Activated CD4-positive, alpha-beta T cell treated with anti-CD3 and anti-CD28 coated beads for 36 hours (primary cell): ENCODE measurements at regions of chr9 and their contacts with region 1.

Region 1: DNA sequence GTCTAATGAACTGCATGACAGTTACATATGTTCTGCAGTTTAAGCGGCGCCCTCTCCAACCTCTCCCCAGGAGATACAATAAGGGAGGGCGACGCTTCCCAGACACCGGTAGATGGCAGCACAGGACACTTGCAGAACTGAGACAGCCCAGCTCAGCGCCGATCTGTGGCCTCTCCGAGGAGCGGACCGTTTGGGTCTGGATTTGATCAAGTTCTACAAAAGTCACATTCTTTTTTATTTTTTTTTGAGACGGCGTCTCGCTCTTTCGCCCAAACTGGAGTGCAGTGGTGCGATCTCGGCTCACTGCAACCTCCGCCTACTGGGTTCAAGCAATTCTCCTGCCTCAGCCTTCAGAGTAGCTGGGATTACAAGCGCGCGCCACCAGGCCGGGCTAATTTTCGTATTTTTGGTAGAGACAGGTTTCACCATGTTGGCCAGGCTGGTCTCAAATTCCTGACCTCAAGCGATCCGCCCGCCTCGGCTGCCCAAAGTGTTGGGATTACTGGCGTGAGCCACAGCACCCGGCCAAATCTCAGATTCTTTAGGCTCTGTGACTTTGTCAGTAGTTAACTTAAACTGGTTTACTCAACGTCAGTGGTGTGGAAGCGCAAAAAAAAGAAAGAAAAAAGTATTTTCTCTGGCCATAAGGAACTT is 1.4 kb upstream of the ATOSB start:
- DNase-seq: peak; percentile 94
- ATAC-seq: peak; percentile 66
- H3K4me3 Mint-ChIP-seq: peak overlapping the region; percentile 77
- H3K27ac Mint-ChIP-seq: peak overlapping the region; percentile 87
- H3K4me1 Mint-ChIP-seq: peaks cover 44% of the 10 kb centered on the region
- H3K27me3 Mint-ChIP-seq: no peaks in the 10 kb centered on the region

Region 2: DNA sequence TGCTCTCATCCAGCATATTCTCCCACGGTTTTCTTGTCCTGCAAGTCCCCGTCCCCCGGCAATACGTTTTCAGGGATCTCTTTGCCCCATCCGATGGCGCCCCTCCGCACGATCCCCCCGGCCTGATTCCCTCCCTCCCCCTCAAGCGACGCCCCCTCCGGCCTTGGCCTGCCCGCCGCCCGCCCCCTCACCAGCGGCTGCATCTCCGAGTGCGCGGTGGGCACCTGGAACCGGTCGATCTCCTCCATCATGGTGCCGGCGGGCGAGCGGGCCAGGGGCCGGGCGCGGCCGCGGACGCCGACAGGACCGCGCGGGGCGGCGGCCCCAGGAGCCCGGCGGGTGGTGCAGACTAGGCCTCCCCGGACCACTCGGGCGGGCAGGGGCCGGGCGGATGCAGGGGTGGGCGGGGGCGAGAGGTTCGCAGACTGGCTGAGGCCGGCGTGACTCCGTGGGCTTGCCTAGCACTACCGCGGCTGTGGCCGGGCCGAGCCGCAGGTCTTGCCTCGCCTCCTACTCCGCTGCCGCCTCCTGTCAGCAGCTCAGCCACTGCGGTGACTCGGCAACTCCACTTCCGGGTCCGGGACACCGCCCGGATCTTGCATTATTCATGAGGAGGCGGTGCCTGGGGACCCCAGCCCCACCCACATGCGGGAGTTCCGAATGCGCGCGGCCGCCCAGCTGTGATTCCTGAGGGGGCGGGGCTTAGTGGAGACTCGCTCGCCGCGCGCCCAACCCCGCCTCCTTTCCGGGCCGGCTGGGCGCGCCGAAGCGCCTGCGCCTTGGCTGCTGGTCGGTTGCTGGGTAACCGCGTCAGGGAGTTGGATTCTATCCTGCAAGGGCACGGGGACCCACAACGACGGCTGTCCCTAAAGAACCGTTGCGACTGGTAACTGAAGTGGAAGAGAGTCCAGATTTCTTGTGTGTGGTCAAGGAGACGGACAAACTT is 658.7 kb before region 1 on chr9 and contains the starts of genes DNAI1 and FAM219A:
- CTCF ChIA-PET with region 1: no interaction called
- POLR2A ChIA-PET with region 1: no interaction called
- intact Hi-C with region 1: loop called in 1 of 2 experiments (anchors 2 kb)
- DNase-seq: peak; percentile 99
- ATAC-seq: peak; percentile 92
- H3K4me3 Mint-ChIP-seq: peak within 1 kb of the TSS; percentile 84
- H3K27ac Mint-ChIP-seq: peak within 1 kb of the TSS; percentile 75
- H3K4me1 Mint-ChIP-seq: peaks cover 45% of the 10 kb centered on the region
- H3K27me3 Mint-ChIP-seq: peaks cover 9% of the 10 kb centered on the region
- total RNA-seq, gene DNAI1: 0.34 TPM in 1 of 2 experiments, not detected in the other
- total RNA-seq, gene FAM219A: 9.7 to 12.9 TPM

Region 3: GRCh38 chr9:35079426-35080341 is 37.3 kb before region 1 on chr9 and contains the start of gene FANCG:
- CTCF ChIA-PET with region 1: interaction called, 4 read pairs
- POLR2A ChIA-PET with region 1: interaction called, 5 read pairs
- intact Hi-C with region 1: loop called in 1 of 2 experiments (anchors 1 kb)
- DNase-seq: peak; percentile 93
- ATAC-seq: peak; percentile 94
- H3K4me3 Mint-ChIP-seq: peak within 1 kb of the TSS; percentile 81
- H3K27ac Mint-ChIP-seq: peak within 1 kb of the TSS; percentile 96
- H3K4me1 Mint-ChIP-seq: peaks cover 16% of the 10 kb centered on the region
- H3K27me3 Mint-ChIP-seq: no peaks in the 10 kb centered on the region
- total RNA-seq, gene FANCG: 92.8 to 93.4 TPM

Region 4: DNA sequence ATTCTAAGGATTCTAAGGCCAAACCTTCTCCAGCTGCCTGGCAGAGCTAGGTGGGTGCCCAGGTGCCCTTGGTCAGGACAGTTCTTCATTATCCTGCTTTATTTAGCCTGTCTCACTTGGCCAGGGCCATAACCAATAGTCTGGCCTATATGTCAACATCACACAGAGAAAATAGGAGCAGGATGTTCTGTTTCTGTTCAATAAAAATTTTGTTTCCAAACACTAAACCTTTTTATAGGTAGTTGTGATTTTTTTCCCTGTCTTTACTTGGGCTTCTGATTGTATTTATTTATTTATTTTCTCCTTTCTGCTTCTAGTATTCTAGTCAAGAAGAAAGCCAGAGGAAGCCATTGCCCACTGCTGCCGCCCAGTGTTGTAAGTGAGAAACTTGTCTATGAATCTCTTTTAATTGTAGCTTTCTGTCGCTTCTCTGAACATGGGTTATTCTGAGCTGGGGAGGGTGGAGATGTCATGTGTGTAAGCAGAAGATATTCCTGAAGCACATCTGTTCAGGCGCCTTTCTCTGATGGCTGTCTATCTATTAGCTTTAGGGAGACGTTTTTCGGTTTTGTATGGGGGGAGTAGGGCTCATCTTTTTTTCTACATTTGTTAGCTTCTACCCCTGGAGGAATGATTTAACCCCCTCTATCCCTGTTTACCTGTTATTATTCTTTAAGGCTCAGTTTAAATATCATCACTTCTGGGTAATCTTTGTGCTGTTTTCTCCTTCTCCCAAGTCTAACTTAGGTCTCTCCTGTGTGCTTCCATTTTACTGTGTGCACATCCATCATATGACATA is 141.8 kb after region 1 on chr9:
- CTCF ChIA-PET with region 1: interaction called, 15 read pairs
- POLR2A ChIA-PET with region 1: no interaction called
- intact Hi-C with region 1: loop called (anchors 1 kb)
- DNase-seq: peak; percentile 68
- ATAC-seq: peak; percentile 42
- H3K4me3 Mint-ChIP-seq: no peak overlapping the region
- H3K27ac Mint-ChIP-seq: no peak overlapping the region
- H3K4me1 Mint-ChIP-seq: no peaks in the 10 kb centered on the region
- H3K27me3 Mint-ChIP-seq: peaks cover 2% of the 10 kb centered on the region

Region 5: DNA sequence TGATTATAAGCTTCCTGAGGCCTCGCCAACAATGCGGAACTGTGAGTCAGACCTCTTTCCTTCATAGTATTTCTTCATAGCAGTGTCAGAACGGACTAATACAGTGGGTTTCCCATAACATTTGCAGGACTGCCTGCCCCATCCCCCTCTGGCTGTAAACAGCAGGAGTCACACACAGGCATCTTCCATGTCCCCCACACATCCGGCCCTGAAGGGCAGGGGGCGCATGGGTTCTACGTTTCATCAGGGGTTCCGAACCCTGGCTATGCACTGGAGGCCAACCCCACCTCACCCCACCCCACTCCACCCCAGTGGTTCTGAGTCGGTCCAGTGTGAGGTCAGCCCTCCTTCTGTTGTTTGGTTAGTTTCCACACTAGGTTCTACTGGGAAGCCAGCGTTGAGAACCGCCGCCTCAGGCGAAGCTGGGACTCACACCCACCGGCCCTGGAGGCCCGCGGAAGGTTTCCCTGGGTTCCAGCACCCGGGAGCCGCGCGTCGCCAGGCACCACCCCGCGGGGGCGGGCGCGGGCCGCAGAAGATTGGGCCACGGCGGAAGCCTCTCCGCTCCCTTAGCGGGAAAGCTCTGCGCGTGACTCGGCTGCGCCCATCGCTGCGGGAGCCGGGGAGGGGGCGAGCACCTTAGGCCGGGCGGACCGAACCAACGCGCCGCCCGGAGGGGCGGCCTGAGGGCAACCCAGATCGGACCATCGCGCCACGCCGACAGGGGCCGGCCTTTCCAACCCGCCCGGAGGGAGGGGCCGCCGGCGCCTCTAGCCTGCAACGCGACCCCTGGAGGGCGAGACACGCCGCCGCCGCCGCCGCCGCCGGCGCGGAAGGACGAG is 372.5 kb after region 1 on chr9 and contains the start of gene RUSC2:
- CTCF ChIA-PET with region 1: no interaction called
- POLR2A ChIA-PET with region 1: no interaction called
- intact Hi-C with region 1: loop called in 1 of 2 experiments (anchors 1 kb)
- DNase-seq: peak; percentile 82
- ATAC-seq: peak; percentile 72
- H3K4me3 Mint-ChIP-seq: peak within 1 kb of the TSS; percentile 76
- H3K27ac Mint-ChIP-seq: peak within 1 kb of the TSS; percentile 79
- H3K4me1 Mint-ChIP-seq: peaks cover 31% of the 10 kb centered on the region
- H3K27me3 Mint-ChIP-seq: peaks cover 9% of the 10 kb centered on the region
- total RNA-seq, gene RUSC2: 5.7 to 6.5 TPM

Region 6: DNA sequence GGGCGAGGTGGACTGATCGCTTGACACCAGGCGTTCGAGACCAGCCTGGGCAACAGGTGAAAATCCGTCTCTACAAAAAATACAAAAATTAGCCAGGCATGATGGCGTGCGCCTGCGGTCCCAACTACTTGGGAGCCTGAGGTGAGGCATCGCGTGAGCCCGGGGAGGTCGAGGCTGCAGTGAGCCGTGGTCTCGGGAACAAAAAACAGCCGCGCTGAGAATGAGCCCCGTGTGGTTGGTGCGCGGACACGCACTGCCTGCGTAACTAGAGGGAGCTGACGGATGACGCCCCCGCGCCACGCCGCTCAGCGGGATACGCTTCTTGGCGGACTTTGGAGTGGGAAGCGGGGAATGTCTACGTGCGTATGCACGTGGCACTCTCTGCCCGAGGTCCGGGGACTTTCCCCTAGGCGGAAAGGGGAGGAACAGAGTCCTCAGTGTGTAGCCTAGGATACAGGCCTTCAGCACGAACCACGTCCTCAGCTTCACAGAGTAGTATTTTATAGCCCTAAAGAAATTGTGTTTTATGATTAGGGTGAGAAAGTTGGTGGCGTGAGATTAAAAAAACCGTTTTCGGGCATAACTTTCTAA is 540.6 kb after region 1 on chr9 and contains the start of gene RMRP:
- CTCF ChIA-PET with region 1: no interaction called
- POLR2A ChIA-PET with region 1: no interaction called
- intact Hi-C with region 1: loop called in 1 of 2 experiments (anchors 2 kb)
- DNase-seq: peak; percentile 97
- ATAC-seq: peak; percentile 95
- H3K4me3 Mint-ChIP-seq: peak within 1 kb of the TSS; percentile 80
- H3K27ac Mint-ChIP-seq: peak within 1 kb of the TSS; percentile 98
- H3K4me1 Mint-ChIP-seq: peaks cover 64% of the 10 kb centered on the region
- H3K27me3 Mint-ChIP-seq: peaks cover 2% of the 10 kb centered on the region
- total RNA-seq, gene RMRP: 894 to 11,462 TPM

Region 7: DNA sequence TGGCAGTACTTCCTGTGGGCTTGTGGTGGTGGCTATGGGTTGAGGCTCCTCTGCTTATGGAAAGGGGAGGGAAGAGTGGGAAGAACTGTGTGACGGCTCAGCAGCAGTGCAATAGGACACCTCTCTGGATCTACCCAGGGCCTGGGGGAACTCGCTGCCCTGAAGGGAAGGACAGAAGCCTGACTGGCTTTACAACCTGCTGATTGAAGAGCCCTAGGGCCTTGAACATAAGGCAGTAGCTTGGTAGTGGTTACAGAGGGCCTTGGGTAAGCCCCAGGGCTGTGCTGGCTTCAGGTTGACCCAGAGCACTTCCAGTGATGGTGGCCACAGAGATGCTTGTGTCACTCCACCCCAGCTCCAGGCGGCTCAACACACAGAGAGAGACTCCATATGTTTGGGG is 1057.7 kb after region 1 on chr9:
- CTCF ChIA-PET with region 1: no interaction called
- POLR2A ChIA-PET with region 1: no interaction called
- intact Hi-C with region 1: no loop called
- DNase-seq: no peak
- ATAC-seq: no peak
- H3K4me3 Mint-ChIP-seq: no peak overlapping the region
- H3K27ac Mint-ChIP-seq: no peak overlapping the region
- H3K4me1 Mint-ChIP-seq: no peaks in the 10 kb centered on the region
- H3K27me3 Mint-ChIP-seq: no peaks in the 10 kb centered on the region